ENCODE measurements at regions of chr2 and their contacts with region 1.

Region 1: DNA sequence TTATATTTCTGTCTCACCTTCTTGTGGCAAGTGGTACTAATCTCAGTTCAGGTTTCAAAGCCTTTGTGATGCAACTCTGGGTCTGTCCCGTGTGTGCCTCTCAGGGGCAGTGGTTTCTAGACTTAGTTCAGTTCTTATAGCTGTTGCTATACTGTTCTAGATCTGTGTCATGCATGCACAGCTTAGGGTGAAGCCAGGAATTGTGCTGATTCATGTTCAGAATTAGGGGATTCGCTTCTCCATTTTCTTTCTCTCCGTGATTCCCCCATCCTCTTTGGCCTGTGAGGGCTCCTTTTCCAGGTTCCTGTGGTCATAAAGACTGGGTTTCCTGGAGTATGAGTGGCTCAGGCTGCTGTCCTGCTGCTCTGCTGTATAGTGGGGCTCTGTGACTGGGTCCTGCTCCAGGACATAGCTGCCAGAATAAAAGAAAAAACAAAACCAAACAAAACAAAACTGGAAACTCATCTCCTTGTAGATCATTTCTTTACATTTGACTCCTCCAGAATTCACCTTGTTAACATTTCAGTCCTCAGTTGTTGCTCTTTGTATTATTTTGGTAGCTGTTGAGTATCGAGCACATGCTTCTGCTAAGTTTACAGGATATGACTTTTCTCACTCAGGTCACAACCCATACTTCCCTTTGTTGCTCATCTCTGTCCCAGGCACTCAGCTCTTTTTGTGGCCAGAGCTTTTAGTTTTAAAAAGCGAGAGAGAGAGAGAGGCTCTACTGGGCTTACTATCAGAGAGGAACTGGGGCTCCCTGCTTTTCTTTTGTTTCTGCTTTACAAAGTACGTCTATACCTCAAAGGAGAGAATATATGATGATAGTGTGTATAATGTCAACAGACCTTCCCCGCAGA is 34.2 kb downstream of the CERS6 start:
- DNase-seq: peak; percentile 78
- H3K4me3 Mint-ChIP-seq: peak overlapping the region; percentile 65
- H3K27ac Mint-ChIP-seq: peak overlapping the region; percentile 89
- H3K4me1 Mint-ChIP-seq: peaks cover 40% of the 10 kb centered on the region
- H3K27me3 Mint-ChIP-seq: peaks cover 7% of the 10 kb centered on the region

Region 2: DNA sequence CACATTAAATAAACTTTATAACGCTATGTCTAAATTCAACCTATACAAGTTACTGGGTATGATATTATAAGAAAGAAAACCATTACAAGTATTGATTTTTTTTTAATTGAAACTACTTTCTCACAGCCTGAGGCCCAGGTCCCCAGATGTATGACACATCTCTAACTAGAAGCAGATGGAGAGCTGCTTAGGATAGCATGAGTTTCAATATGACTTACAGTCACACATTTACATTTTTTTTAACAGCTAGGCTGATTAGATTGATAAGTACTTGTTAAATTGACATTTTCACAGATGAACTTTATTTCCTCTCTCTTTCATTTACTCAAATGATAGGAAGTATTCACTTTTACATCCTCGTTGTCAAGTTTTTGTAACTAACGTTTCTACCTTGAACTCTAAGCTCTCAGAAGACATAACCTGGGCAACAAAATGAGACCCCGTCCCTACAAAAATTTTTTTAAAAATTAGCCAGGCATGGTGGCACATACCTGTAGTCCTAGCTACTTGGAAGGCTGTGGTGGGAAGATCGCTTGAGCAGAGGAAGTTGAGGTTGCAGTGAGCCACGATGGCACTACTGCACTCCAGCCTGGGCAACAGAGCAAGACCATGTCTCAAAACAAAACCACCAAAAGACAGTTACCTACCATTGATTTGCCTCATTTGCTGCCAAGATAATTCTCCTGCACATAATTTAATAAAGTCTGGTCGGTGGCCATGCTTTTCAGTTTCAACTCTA is 295.3 kb before region 1 on chr2:
- CTCF ChIA-PET with region 1: no interaction called
- POLR2A ChIA-PET with region 1: no interaction called
- intact Hi-C with region 1: loop called (anchors 1 kb)
- DNase-seq: peak; percentile 55
- H3K4me3 Mint-ChIP-seq: peak overlapping the region; percentile 66
- H3K27ac Mint-ChIP-seq: peak overlapping the region; percentile 95
- H3K4me1 Mint-ChIP-seq: peaks cover 85% of the 10 kb centered on the region
- H3K27me3 Mint-ChIP-seq: no peaks in the 10 kb centered on the region

Region 3: DNA sequence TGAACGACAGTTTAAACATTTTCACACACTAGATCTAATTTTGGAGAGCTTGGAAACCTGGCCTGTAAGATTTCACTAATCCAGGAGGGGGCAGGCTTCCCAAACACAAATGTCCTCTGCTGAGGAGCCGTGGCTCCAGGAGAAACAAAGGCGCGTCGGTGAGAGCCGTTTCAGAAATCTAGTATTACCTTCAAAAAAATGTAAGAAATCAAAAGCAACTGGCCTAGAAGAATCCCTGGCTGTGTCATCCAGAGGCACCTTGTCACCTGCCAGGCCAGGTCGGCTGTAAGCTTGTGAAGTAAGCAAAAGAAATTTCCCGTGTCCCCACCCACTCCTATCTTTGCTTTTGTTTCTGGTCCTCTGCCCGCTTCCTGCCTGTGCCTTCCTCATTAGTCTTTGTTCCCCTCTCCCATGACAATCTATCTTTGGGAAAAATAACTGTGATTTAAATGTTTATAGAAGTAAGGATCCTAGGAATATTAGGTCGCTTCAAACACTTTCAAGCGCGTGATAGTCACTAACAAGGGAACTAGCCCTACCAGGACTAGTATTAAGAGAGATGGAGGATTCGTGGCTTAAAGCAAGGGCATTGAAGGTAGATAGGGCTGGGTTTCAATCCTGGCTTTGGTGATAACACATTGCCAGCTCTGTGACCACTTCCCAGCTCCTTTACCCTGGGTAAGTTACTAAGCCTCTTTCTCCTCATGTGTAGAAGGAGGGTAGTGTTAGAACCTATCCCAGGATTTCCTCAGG is 143.3 kb before region 1 on chr2:
- CTCF ChIA-PET with region 1: interaction called, 6 read pairs
- POLR2A ChIA-PET with region 1: no interaction called
- intact Hi-C with region 1: loop called (anchors 10 kb)
- DNase-seq: peak; percentile 79
- H3K4me3 Mint-ChIP-seq: peak overlapping the region; percentile 75
- H3K27ac Mint-ChIP-seq: no peak overlapping the region
- H3K4me1 Mint-ChIP-seq: peaks cover 4% of the 10 kb centered on the region
- H3K27me3 Mint-ChIP-seq: peaks cover 3% of the 10 kb centered on the region

Region 4: DNA sequence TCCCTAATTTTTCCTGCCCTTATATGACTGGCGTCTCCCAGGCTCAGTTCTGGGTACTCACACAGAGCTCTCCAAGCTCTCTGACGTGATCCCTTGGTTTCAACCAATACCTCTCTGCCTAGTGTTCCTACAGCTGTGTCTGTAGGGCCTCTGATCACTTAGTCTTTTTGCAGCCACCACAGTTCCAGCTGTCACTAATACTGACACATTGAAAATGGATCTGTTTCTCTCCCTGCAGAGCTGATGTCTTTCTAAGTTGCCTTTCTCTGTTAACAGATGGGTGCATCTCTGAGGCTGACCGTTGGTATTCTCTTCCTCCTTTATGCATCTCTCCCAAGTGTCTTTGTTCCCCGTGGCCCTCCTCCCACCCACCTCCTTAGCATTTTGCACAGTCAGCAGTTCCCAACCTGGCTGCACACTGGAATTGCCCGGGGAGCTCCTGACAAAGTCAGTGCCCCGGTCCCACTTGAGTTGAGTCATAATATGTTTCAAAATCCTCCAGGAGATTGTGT is 28.4 kb after region 1 on chr2:
- CTCF ChIA-PET with region 1: no interaction called
- POLR2A ChIA-PET with region 1: no interaction called
- intact Hi-C with region 1: no loop called
- DNase-seq: no peak
- H3K4me3 Mint-ChIP-seq: no peak overlapping the region
- H3K27ac Mint-ChIP-seq: no peak overlapping the region
- H3K4me1 Mint-ChIP-seq: peaks cover 37% of the 10 kb centered on the region
- H3K27me3 Mint-ChIP-seq: no peaks in the 10 kb centered on the region

Region 5: DNA sequence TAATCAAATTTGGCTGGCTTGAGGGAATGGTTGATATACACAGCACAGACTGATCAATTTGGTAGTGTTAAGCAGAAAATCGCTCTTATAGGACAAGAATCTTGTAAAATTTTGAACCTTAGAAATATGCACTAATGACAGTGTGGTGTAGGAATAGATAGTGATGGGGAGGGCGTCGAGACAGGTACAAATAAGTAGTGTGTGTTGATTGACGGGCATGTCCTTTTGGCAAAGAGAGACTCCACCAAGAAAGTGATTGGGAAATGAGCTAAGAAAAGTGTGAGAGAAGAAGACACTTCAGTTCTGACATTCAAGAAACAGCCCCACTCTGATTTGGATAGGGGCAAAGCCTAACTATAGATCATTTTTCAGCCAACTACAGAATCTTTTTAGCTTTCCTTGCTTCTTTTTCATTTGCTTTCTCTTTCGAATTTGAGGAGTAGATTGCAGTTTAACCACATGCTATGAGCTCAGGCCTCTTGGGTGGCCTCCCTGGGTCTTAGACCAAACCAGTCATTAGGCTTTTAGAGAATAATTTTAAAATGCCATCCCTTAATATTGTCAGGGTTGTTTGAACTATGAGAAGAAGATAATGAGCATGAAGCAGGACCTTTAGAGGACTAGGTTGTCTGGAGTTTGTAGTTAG is 92.9 kb after region 1 on chr2:
- CTCF ChIA-PET with region 1: no interaction called
- POLR2A ChIA-PET with region 1: no interaction called
- intact Hi-C with region 1: loop called (anchors 2 kb)
- DNase-seq: no peak
- H3K4me3 Mint-ChIP-seq: no peak overlapping the region
- H3K27ac Mint-ChIP-seq: no peak overlapping the region
- H3K4me1 Mint-ChIP-seq: peaks cover 38% of the 10 kb centered on the region
- H3K27me3 Mint-ChIP-seq: no peaks in the 10 kb centered on the region

Region 6: DNA sequence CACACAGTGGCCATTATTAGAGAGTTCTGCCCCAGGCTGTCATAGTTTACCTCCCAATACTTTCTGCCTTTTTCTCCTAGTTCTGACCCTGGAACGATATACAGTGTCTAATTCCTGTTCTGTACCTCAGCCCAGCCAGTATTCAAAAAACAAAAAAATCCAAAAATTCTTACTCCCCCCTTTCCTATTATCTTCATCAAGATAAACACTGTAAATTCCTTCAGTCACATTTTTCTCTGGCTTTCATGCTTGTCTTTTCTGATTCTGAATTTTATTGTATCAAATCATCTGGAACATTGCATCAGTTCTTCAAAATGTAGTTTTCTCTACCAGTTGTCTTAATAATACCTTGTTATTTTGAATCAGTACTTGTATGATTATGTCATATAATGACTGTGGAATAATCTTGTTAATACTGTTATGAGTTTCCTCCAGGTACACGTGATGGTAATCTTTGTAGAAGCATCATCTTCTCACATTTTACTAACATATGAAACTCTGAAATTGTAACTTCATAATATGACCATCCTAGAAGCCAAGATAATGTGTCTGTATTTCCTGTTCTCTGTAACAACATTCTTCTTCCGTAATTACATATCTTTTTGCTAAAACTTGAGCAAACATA is 233.1 kb after region 1 on chr2:
- CTCF ChIA-PET with region 1: no interaction called
- POLR2A ChIA-PET with region 1: no interaction called
- intact Hi-C with region 1: loop called (anchors 1 kb)
- DNase-seq: no peak
- H3K4me3 Mint-ChIP-seq: no peak overlapping the region
- H3K27ac Mint-ChIP-seq: no peak overlapping the region
- H3K4me1 Mint-ChIP-seq: peaks cover 15% of the 10 kb centered on the region
- H3K27me3 Mint-ChIP-seq: no peaks in the 10 kb centered on the region

Region 7: DNA sequence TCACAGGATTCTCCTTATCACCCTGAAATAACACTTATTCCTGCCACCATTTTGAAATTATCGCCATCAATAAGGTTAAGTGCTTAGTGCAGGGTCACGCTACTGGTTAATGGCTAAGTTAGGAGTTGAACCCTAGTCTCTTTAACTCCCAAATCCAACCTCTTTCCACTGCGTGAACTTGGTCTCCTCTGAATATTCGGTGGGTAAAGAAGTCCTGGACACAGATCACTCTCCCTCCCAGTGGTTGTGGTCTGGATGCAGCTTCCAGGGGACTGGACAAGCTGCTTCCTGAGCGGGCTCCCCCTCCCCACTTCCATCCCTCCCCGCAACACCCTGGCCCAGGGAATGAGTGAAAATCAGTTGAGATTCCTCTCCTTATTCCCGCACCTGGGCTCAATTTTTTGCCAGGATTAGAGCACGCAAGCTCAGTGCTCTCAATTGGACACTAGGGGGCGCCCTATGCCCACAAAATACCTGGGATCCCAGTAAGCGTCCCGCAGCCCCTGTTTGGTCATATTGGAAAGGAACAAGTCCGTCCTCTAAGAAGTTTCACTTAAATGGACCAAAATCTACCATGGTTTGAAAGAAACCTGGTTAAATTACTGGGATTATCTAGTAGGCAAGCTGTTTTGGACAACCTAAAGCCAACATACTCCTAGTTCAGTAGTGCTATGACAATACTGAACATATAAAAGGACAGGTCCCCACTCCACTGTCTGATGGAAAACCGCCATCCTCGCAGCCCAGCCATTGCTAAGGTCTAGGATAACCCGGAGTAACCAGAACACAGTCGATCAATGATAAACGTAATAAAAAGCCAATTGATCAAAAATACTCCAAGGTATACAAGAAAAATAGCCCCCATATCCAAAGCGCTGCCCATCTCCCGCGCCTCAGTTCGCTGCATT is 619.5 kb after region 1 on chr2:
- CTCF ChIA-PET with region 1: no interaction called
- POLR2A ChIA-PET with region 1: no interaction called
- intact Hi-C with region 1: loop called (anchors 10 kb)
- DNase-seq: peak; percentile 82
- H3K4me3 Mint-ChIP-seq: no peak overlapping the region
- H3K27ac Mint-ChIP-seq: no peak overlapping the region
- H3K4me1 Mint-ChIP-seq: peaks cover 44% of the 10 kb centered on the region
- H3K27me3 Mint-ChIP-seq: no peaks in the 10 kb centered on the region